ENCODE measurements at regions of chr6 and their contacts with region 1.

Region 1: GRCh38 chr6:20403070-20403765 is 1.5 kb downstream of the E2F3 start:
- DNase-seq: peak; percentile 97 to 99 (median 97)
- H3K4me3 ChIP-seq: peak overlapping the region; percentile 78 to 99 (median 86)
- H3K27ac ChIP-seq: peak overlapping the region; percentile 93 to 97
- H3K4me1 ChIP-seq: peaks cover 18 to 51% (median 36%) of the 10 kb centered on the region in 4 experiments
- H3K27me3 ChIP-seq: no peaks in the 10 kb centered on the region

Region 2: GRCh38 chr6:19873031-19873430 is 530.2 kb before region 1 on chr6:
- CTCF ChIA-PET with region 1: no interaction called
- POLR2A ChIA-PET with region 1: no interaction called
- DNase-seq: no peak
- H3K4me3 ChIP-seq: no peak overlapping the region
- H3K27ac ChIP-seq: no peak overlapping the region
- H3K4me1 ChIP-seq: no peaks in the 10 kb centered on the region
- H3K27me3 ChIP-seq: peaks cover 0 to 2% (median 0%) of the 10 kb centered on the region in 5 experiments

Region 3: DNA sequence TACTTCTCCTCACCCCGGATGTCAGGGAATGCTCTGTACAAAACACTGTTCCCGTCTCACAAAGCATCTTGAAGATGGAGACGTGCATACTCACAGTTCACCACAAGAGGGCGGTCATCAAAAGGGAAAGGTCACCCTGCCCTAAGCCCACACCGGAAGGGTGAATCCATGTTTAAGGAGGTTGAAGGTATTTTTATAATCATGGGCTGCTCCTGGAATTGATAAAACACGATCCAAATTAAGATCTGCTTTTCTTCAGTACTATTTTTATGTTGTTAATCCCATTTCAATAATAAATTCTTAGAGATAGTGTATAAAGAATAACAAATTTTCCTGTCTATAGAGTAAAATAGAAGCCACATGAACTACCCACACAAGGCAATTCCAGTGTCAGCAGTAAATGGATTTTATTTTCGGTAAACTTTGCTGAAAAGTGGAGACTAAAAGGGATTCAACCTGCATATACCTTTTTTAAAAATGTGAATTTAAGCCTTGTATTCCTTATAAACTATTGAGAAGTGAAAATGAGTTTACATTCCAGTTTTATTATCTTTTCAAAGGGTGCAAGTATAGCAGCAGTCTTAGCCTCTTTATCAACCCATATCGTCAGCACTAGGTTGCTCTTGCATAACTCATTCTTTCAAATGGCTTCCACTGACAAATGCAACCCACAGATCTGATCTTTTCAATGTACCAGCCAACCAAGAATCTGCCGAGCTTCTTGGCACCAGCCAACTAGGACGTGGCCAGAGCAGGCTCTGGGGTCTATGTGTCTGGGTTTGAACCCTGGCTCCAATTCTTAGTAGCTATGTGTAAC is 111.2 kb before region 1 on chr6:
- CTCF ChIA-PET with region 1: interaction called, 24 read pairs
- POLR2A ChIA-PET with region 1: no interaction called
- DNase-seq: peak; percentile 76 to 82 (median 79)
- H3K4me3 ChIP-seq: peak overlapping the region in 1 of 7 experiments; percentile 64
- H3K27ac ChIP-seq: no peak overlapping the region
- H3K4me1 ChIP-seq: peaks cover 0 to 8% (median 3%) of the 10 kb centered on the region in 4 experiments
- H3K27me3 ChIP-seq: no peaks in the 10 kb centered on the region

Region 4: DNA sequence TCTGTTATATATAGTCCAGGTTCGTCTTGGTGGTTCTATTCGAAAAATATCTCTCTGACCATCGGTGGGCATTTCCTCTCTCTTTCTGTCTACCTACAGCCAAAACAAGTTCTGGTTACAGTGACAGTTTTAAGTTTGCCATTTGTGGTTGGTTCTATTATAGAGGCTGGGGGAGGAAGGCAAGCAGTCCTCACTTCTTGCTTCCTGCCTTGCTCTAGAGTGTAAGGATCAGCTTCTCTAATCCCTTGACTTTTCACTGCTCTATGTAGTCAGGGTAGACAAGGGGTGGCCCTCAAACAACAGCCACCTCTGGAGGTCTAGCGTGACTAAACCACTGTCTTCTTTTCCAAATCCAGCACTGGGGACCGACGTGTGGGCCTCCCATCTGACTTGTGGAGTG is 14.6 kb after region 1 on chr6:
- CTCF ChIA-PET with region 1: interaction called, 29 read pairs
- POLR2A ChIA-PET with region 1: interaction called, 19 read pairs
- DNase-seq: peak; percentile 29 to 85 (median 67)
- H3K4me3 ChIP-seq: peak overlapping the region in 5 of 7 experiments; percentile 8 to 55 (median 51)
- H3K27ac ChIP-seq: peak overlapping the region; percentile 53 to 80
- H3K4me1 ChIP-seq: peaks cover 17 to 75% (median 60%) of the 10 kb centered on the region in 4 experiments
- H3K27me3 ChIP-seq: no peaks in the 10 kb centered on the region

Region 5: GRCh38 chr6:20438462-20439070 is 35.3 kb after region 1 on chr6:
- CTCF ChIA-PET with region 1: interaction called, 15 read pairs
- POLR2A ChIA-PET with region 1: interaction called, 3 read pairs
- DNase-seq: no peak
- H3K4me3 ChIP-seq: no peak overlapping the region
- H3K27ac ChIP-seq: no peak overlapping the region
- H3K4me1 ChIP-seq: peaks cover 0 to 2% (median 0%) of the 10 kb centered on the region in 4 experiments
- H3K27me3 ChIP-seq: no peaks in the 10 kb centered on the region

Region 6: GRCh38 chr6:20458027-20458894 is 55.0 kb after region 1 on chr6:
- CTCF ChIA-PET with region 1: interaction called, 13 read pairs
- POLR2A ChIA-PET with region 1: interaction called, 6 read pairs
- DNase-seq: peak; percentile 66 to 91 (median 83)
- H3K4me3 ChIP-seq: peak overlapping the region in 3 of 7 experiments; percentile 30 to 50 (median 46)
- H3K27ac ChIP-seq: peak overlapping the region; percentile 73 to 86
- H3K4me1 ChIP-seq: peaks cover 18 to 59% (median 42%) of the 10 kb centered on the region in 4 experiments
- H3K27me3 ChIP-seq: no peaks in the 10 kb centered on the region

Region 7: GRCh38 chr6:20467437-20467836 is 64.2 kb after region 1 on chr6:
- CTCF ChIA-PET with region 1: interaction called, 3 read pairs
- POLR2A ChIA-PET with region 1: interaction called, 12 read pairs
- DNase-seq: peak in 2 of 3 donors; percentile 31 to 49
- H3K4me3 ChIP-seq: peak overlapping the region in 2 of 7 experiments; percentile 20 to 36
- H3K27ac ChIP-seq: peak overlapping the region in 1 of 2 experiments; percentile 38
- H3K4me1 ChIP-seq: peaks cover 0 to 29% (median 13%) of the 10 kb centered on the region in 4 experiments
- H3K27me3 ChIP-seq: no peaks in the 10 kb centered on the region

Region 8: GRCh38 chr6:20483897-20484497 is 80.8 kb after region 1 on chr6:
- CTCF ChIA-PET with region 1: interaction called, 16 read pairs
- POLR2A ChIA-PET with region 1: interaction called, 3 read pairs
- DNase-seq: peak; percentile 43 to 67 (median 64)
- H3K4me3 ChIP-seq: no peak overlapping the region
- H3K27ac ChIP-seq: peak overlapping the region in 1 of 2 experiments; percentile 9
- H3K4me1 ChIP-seq: peaks cover 6 to 23% (median 15%) of the 10 kb centered on the region in 4 experiments
- H3K27me3 ChIP-seq: no peaks in the 10 kb centered on the region